Cardiac septum (tissue), 1 donor: ENCODE measurements at regions of chr3 and their contacts with region 1.

Region 1: GRCh38 chr3:152382312-152383135 is 113.8 kb downstream of the MBNL1 start:
- DNase-seq: no peak

Region 2: DNA sequence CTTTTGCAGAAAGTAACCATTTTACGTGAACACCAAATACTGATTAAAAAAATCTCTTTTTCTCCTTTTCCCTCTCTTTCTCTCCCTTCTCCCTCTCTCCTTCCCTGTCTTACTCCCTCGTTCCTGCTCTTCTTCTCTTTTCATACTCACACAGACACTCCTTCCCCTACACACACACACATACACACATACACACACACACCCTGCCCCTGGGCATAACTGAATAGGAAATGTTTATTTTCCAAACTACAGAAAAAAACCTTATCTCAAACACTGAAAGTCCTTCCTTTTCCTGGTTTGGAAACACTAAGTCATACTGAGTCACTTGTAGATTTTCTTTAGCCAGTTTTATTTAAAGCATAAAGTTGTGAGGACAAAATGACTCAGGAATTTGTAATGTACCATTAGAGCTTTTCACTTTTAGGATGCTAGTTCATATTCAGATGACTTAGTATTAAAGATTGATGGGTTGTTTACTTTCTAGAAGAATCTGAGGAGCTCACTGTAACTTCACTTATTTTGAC is 51.4 kb before region 1 on chr3:
- intact Hi-C with region 1: loop called (anchors 5 kb)
- DNase-seq: no peak

Region 3: DNA sequence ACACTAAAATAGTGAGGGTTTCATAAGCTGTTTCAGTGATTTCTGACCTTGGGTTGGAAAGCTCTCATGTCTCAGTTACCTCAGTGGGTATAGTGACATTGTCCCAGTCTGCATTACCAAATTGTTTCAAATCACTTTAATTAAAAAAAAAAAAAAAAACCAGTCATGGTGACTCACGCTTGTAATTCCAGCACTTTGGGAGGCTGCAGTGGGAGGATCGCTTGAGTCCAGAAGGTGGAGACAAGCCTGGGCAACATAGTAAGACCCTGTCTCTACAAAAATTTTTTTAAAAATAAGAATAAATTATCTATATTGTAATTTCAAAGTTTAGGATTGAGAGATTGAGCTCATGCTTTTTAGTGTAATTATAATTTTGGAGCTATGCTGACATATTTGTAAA is 35.8 kb before region 1 on chr3:
- intact Hi-C with region 1: no loop called
- DNase-seq: no peak

Region 4: GRCh38 chr3:152428577-152428976 is 46.1 kb after region 1 on chr3:
- intact Hi-C with region 1: no loop called
- DNase-seq: no peak

Region 5: GRCh38 chr3:152480282-152480953 is 97.9 kb after region 1 on chr3:
- intact Hi-C with region 1: no loop called
- DNase-seq: no peak

Region 6: GRCh38 chr3:152524198-152525140 is 141.9 kb after region 1 on chr3:
- intact Hi-C with region 1: no loop called
- DNase-seq: no peak